A673 (cell line): ENCODE measurements at regions of chr21 and their contacts with region 1.

Region 1: GRCh38 chr21:39388038-39388810 is 39.3 kb upstream of the HMGN1 start:
- DNase-seq: peak; percentile 91
- H3K4me3 ChIP-seq: peak overlapping the region; percentile 48
- H3K27ac ChIP-seq: peak overlapping the region; percentile 70
- H3K4me1 ChIP-seq: peaks cover 13% of the 10 kb centered on the region
- H3K27me3 ChIP-seq: no peaks in the 10 kb centered on the region
- CTCF ChIP-seq: peak; percentile 97

Region 2: GRCh38 chr21:39183237-39184007 is 204.8 kb before region 1 on chr21 and contains the start of gene PSMG1:
- CTCF ChIA-PET with region 1: interaction called, 8 read pairs
- POLR2A ChIA-PET with region 1: no interaction called
- intact Hi-C with region 1: loop called (anchors 5 kb)
- DNase-seq: peak; percentile 96
- H3K4me3 ChIP-seq: peak within 1 kb of the TSS; percentile 86
- H3K27ac ChIP-seq: peak within 1 kb of the TSS; percentile 95
- H3K4me1 ChIP-seq: peaks cover 12% of the 10 kb centered on the region
- H3K27me3 ChIP-seq: no peaks in the 10 kb centered on the region
- CTCF ChIP-seq: no peak
- total RNA-seq, gene PSMG1: 96.5 and 101 TPM in 2 replicates

Region 3: DNA sequence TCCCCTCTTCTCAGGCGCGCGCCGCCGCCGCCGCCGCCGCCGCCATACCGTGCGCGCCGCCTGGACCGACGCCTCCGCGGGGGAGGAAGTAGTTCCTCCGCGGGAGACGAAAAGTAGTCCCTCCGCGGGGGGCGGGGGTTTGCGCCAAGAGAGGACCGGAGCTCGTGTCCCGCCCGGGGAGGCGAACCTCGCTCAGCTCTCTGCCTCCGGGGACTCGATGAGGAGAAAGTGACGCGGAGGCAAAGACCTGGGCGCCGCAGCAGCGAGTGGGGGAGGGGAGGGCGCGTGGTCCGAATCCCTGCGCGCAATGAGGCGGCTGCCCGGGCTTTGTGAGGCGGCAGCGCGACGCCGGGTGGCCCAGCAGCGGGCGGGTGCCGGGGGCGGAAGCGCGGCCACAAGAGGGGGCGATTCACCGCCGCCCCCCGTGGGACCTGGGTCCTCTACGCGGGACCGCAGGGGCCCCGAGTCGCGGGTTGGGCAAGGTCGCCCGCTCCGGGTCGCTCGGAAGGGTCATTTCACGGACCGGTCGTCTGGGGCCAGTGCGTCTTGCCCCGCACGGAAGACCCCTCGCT is 74.6 kb before region 1 on chr21 and contains the start of gene BRWD1:
- CTCF ChIA-PET with region 1: no interaction called
- POLR2A ChIA-PET with region 1: interaction called, 4 read pairs
- intact Hi-C with region 1: loop called (anchors 2 kb)
- DNase-seq: peak; percentile 91
- H3K4me3 ChIP-seq: peak within 1 kb of the TSS; percentile 70
- H3K27ac ChIP-seq: peak within 1 kb of the TSS; percentile 99
- H3K4me1 ChIP-seq: peaks cover 15% of the 10 kb centered on the region
- H3K27me3 ChIP-seq: no peaks in the 10 kb centered on the region
- CTCF ChIP-seq: peak; percentile 26; the same call in 1 of the 2 replicates
- total RNA-seq, gene BRWD1: 27.6 and 36.2 TPM in 2 replicates

Region 4: DNA sequence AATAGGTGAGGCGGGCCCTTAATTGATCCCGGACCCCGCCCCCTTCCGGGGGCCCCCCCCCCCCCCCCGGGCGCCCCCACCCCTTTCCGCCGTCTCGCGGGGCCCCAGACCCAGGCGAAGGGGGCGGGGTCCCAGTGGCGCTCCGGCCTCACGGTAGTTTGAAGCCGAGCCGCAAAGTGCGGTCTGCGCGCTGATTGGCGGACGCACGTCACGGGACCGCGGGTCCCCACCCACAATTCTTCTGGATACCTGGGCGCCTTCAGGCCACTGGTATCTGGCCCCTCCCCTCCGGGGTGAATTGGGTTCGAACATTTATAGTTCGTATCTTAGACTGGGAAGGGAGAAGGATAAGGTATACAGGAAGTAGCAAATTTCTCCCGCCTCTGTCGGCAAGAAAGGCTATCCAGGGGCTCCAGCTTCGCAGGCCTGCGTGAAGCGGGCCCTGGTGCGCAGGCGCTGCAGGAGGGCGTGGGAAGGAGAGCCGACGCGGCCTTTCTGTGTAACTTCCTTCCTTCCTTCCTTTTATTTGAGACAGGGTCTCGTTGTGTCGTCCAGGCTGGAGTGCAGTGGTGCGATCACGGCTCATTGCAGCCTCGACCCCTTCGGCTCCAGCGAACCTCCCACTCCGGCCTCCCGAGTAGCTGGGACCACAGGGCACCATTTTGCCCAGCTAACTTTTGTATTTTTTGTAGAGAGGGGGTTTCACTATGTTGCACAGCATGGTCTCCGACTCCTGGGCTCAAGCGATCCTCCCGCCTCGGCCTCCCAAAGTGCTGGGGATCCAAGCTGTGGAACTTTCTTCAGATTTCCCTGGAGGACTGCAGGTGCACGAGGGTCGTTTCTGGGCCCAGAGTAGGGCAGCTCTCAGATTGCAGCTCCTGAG is 38.8 kb before region 1 on chr21:
- CTCF ChIA-PET with region 1: interaction called, 26 read pairs
- POLR2A ChIA-PET with region 1: interaction called, 5 read pairs
- intact Hi-C with region 1: loop called (anchors 2 kb)
- DNase-seq: peak; percentile 98
- H3K4me3 ChIP-seq: peak overlapping the region; percentile 49
- H3K27ac ChIP-seq: peak overlapping the region; percentile 82
- H3K4me1 ChIP-seq: peaks cover 20% of the 10 kb centered on the region
- H3K27me3 ChIP-seq: no peaks in the 10 kb centered on the region
- CTCF ChIP-seq: no peak

Region 5: DNA sequence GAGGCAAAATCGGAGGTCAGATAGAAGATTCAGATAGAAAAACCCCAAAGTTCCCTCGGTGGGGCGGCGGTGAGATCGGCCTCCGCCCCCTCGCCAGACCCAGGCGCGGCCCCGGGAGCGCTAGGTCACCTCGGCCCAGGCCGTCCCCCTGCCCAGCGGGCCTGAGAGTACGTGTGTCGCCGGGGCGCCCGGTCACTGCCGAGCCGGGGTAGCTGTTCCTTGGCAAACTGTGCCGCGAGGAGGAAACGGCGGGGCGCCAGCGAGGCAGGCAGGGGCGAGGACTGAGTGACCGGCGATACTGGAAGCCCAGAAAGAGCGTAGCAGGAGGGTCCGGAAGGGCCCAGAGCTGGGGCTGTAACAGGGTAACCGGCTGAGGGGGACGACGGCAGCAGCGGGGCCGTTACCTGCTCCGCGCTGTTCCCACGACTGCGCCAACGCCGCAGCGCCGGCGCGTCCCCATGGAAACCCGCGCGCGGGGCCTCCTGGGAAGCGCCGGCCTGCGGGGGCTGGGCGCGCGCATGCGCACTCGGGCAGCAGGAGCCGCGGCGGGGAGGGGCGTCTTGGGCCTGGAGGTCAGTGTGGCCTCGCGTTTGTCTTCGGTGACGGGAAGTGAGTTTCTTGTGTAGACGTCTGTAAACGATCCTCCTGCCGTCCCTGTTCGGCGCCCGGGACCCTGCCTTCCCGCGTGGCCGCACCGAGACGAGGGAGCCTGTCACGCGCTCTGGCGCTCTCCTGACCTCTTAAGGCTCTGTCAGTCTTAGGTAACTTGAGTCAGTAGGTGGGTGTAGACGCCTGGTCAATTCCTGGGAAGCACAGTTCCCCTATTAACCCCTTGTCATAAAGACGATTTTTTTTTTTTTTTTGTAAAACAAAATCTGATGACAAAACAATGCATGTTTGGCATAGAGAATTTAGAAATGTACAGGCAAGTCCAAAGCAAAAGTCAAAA is 57.4 kb after region 1 on chr21 and contains the start of gene LCA5L:
- CTCF ChIA-PET with region 1: interaction called, 3 read pairs
- POLR2A ChIA-PET with region 1: interaction called, 18 read pairs
- intact Hi-C with region 1: no loop called
- DNase-seq: peak; percentile 89
- H3K4me3 ChIP-seq: peak within 1 kb of the TSS; percentile 80
- H3K27ac ChIP-seq: peak within 1 kb of the TSS; percentile 75
- H3K4me1 ChIP-seq: no peaks in the 10 kb centered on the region
- H3K27me3 ChIP-seq: no peaks in the 10 kb centered on the region
- CTCF ChIP-seq: 0 out of 2 replicates have a peak, but pooled peaks have one; percentile 31
- total RNA-seq, gene LCA5L: 0.69 and 1.3 TPM in 2 replicates